ENCODE measurements at regions of chr6 and their contacts with region 1.

Region 1: DNA sequence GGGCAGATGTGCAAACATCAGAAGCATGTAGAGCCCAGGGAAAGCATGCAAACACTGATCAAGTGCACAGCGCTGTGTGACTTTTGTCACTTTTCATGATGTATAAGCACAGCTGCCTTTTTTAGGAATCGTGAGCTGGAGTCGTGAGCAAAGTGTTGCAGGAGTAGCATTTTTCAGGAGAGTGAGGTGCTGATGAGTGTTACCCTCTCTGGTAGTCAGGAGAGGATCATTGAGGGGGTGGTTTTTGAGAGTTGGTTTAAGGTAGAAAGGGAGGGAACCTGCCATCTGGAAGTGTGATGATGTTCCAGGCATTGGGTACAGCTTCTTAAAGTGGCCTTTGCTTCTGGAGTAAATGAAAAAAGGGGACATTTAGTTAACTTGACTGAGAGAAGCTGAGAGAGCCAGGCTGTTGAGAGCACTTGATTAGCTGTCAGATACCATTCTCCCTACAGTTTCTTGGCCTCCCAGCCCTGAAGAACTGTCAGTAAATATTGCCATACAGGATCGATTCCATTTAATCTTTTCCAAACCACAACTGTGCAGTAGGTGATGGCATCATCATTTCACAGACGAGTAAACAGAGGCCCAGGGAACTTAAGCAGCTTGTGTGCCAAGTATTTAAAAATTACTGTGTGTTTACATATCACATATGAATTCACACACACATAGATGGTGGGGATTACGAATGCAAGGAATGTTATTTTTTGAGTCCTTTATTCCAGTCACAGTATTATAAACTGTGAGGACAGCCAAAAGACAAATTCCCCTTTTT is 28.9 kb downstream of the TPD52L1 start:
- DNase-seq: no peak
- ATAC-seq: no peak
- H3K4me3 ChIP-seq: no peak overlapping the region
- H3K27ac ChIP-seq: no peak overlapping the region
- H3K4me1 ChIP-seq: peaks cover 0 to 10% (median 0%) of the 10 kb centered on the region in 9 donors
- H3K27me3 ChIP-seq: no peaks in the 10 kb centered on the region
- CTCF ChIP-seq: no peak

Region 2: GRCh38 chr6:125213939-125214338 is 31.5 kb after region 1 on chr6:
- intact Hi-C with region 1: loop called in 1 of 10 experiments (anchors 1 kb)
- DNase-seq: no peak
- ATAC-seq: peak in 3 of 8 donors; percentile 11 to 25 (median 24)
- H3K4me3 ChIP-seq: no peak overlapping the region
- H3K27ac ChIP-seq: peak overlapping the region in 1 of 10 donors; percentile 30
- H3K4me1 ChIP-seq: peaks cover 0 to 36% (median 5%) of the 10 kb centered on the region in 9 donors
- H3K27me3 ChIP-seq: no peaks in the 10 kb centered on the region
- CTCF ChIP-seq: no peak

Measured in heart right ventricle (tissue), 16 donors.